ENCODE measurements at regions of chr2 and their contacts with region 1.

Region 1: GRCh38 chr2:197113275-197113711 is 186.8 kb upstream of the PGAP1 start:
- ATAC-seq: peak in 1 of 8 experiments; percentile 51
- H3K4me3 ChIP-seq: no peak overlapping the region
- H3K27ac ChIP-seq: no peak overlapping the region
- H3K4me1 ChIP-seq: peaks cover 3 to 8% of the 10 kb centered on the region in 2 donors

Region 2: GRCh38 chr2:196839574-196839973 is 273.7 kb before region 1 on chr2:
- in situ Hi-C with region 1: no loop called
- ATAC-seq: peak in 2 of 8 experiments; percentile 56 to 81
- H3K4me3 ChIP-seq: no peak overlapping the region
- H3K27ac ChIP-seq: no peak overlapping the region
- H3K4me1 ChIP-seq: no peaks in the 10 kb centered on the region

Region 3: GRCh38 chr2:197229509-197230443 is 116.5 kb after region 1 on chr2:
- in situ Hi-C with region 1: no loop called
- ATAC-seq: peak in 2 of 8 experiments; percentile 24 to 35
- H3K4me3 ChIP-seq: no peak overlapping the region
- H3K27ac ChIP-seq: no peak overlapping the region
- H3K4me1 ChIP-seq: peaks cover 2 to 28% of the 10 kb centered on the region in 2 donors

Region 4: DNA sequence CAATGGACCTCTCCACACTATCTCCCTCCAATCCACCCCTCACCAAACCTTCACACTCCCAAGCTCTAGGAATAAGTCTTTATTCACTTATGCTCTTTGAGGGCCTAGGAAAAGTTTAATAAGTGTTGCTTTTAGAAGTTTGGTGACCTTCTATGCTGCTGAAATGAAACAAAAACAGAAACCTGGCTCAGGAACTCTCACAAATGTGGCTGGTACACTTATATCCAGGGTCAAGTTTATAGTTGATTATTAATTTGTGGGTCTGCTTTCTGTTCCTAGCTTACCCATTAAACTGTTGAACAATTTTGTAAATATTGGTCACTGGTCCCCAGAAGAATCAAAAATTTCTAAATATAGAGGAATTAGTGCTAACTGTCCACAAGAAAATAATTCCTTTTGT is 211.5 kb after region 1 on chr2:
- in situ Hi-C with region 1: loop called in 1 of 9 experiments (anchors 25 kb)
- ATAC-seq: no peak
- H3K4me3 ChIP-seq: no peak overlapping the region
- H3K27ac ChIP-seq: no peak overlapping the region
- H3K4me1 ChIP-seq: no peaks in the 10 kb centered on the region

Region 5: DNA sequence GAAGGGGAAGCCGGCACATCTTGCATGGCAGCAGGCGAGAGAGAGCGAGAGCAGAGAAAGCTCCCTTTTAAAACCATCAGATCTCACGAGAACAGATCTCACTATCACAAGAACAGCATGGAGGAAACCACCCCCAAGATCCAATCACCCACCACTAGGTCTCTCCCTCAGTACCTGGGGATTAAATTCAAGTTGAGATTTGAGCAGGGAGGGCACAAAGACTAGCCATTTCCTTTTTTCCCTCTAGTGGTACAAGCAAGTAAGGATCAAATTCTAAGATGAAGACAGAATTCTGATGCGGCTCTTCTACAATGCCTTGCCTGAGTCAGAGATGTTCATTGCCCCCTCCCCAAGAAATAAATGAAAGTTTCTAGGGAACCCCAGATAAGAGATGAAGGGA is 242.8 kb after region 1 on chr2:
- in situ Hi-C with region 1: loop called in 1 of 9 experiments (anchors 25 kb)
- ATAC-seq: peak in 1 of 8 experiments; percentile 59
- H3K4me3 ChIP-seq: no peak overlapping the region
- H3K27ac ChIP-seq: no peak overlapping the region
- H3K4me1 ChIP-seq: no peaks in the 10 kb centered on the region

Region 6: GRCh38 chr2:197378494-197379307 is 265.4 kb after region 1 on chr2:
- in situ Hi-C with region 1: loop called in 3 of 9 experiments (anchors 10 to 25 kb)
- ATAC-seq: peak; percentile 61 to 77 (median 68)
- H3K4me3 ChIP-seq: no peak overlapping the region
- H3K27ac ChIP-seq: no peak overlapping the region
- H3K4me1 ChIP-seq: peaks cover 0 to 2% of the 10 kb centered on the region in 2 donors

Region 7: DNA sequence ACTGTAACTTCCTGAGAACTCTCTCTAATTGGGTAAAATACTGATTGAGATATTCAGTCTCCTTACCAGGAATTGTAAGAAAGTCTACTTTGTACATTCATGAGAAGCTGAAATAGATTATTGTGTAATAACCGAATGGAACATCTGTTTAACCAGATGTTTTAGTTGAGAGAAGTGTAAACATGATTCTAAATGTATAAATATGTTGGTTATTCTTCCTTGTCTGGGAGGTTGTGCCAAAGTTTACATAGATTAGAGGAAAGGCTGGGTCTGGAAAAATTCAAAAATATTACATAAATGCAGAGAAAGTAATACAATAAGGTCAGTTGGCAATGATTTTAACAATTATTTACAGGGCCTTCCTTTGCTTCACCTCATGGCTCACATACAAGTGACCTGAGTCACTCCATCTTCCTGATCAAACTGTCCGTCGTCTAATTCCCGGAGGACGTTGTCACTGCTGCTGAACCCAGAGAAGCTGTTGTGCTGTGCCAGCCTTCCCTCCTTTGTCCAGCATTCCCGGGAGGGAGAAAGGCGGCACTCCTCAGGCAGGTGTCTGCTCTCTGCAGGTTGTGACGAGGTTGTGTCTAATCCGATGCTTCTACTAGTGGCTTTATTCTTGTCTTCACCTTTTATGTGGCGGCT is 458.5 kb after region 1 on chr2:
- in situ Hi-C with region 1: no loop called
- ATAC-seq: peak in 4 of 8 experiments; percentile 25 to 80 (median 74)
- H3K4me3 ChIP-seq: no peak overlapping the region
- H3K27ac ChIP-seq: no peak overlapping the region
- H3K4me1 ChIP-seq: peaks cover 0 to 4% of the 10 kb centered on the region in 2 donors